Ovary (tissue), 10 donors: ENCODE measurements at regions of chr5 and their contacts with region 1.

Region 1: DNA sequence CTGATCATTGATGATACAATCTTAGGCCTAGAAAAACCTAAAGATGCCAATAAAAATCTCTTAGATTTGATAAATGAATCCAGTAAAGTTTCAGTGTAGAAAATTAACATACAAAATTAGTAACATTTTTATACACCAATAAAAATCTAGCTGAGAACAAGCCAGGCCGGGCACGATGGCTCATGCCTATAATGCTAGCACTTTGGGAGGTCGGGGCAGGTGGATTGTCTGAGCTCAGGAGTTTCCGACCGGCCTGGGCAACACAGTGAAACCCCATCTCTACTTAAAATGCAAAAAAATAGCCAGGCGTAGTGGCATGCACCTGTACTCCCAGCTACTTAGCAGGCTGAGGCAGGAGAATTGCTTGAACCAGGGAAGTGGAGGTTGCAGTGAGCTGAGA is 84.4 kb downstream of the SLCO6A1 start:
- DNase-seq: no peak
- H3K4me3 ChIP-seq: no peak overlapping the region
- H3K27ac ChIP-seq: no peak overlapping the region
- H3K4me1 ChIP-seq: no peaks in the 10 kb centered on the region
- H3K27me3 ChIP-seq: no peaks in the 10 kb centered on the region
- CTCF ChIP-seq: no peak
- EP300 ChIP-seq: no peak
- POLR2A ChIP-seq: no peak

Region 2: DNA sequence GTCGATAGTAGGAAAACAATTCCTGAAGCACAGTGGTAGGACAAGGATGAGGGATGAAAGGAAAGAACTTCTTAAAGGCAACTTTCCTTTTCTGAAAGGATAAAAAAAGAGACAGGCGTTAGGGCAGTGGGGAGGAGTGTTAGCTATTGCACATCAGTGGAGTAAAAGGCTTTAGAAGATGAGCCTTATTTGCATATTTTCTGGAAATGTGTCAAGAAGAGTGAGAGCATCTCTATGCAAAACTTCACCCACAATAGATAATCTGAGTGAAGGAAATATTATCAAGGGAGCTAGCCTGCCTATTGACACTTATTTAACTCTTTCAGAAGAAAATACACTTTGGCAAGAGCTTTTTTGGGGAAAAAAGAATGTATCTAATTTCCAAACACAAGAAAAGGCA is 995.7 kb after region 1 on chr5:
- intact Hi-C with region 1: loop called in 1 of 4 experiments (anchors 5 kb)
- DNase-seq: no peak
- H3K4me3 ChIP-seq: no peak overlapping the region
- H3K27ac ChIP-seq: no peak overlapping the region
- H3K4me1 ChIP-seq: no peaks in the 10 kb centered on the region
- H3K27me3 ChIP-seq: no peaks in the 10 kb centered on the region
- CTCF ChIP-seq: no peak
- EP300 ChIP-seq: no peak
- POLR2A ChIP-seq: no peak